Activated CD4-positive, alpha-beta T cell treated with anti-CD3 and anti-CD28 coated beads for 36 hours (primary cell): ENCODE measurements at regions of chr9 and their contacts with region 1.

Region 1: DNA sequence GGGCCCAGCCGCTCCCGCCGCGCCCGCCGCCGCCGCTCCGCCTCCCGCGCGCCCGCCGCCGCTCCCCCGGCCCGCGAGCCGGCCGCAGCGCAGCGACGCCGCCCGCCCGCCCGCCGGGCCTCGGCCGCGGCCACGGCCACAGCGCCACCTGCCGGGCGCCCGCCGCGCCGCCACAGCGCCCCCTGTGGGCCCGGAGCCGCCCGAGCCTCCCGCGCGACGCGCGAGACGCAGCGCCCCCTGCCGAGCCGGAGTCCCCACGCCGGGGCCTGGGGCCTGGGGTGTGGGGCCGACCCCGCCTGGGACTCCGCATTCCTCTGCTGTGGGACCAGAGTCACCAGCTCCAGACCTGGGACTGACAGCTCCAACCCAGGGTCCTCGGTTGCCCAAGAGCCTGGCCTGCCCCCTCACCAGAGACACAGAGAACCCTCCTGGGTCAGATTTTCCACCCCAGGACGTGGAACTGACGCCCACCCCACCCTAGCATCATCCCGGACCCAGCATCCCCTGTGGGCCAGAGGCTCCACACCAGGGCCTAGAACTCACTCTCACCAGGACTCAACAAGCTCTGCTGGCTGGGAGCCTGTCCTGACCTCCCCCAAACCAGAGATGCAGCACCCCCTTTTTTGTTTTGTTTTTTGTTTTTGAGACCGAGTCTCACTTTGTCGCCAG is at the start of gene RAPGEF1:
- DNase-seq: peak; percentile 90
- ATAC-seq: peak; percentile 74
- H3K4me3 Mint-ChIP-seq: peak within 1 kb of the TSS; percentile 95
- H3K27ac Mint-ChIP-seq: peak within 1 kb of the TSS; percentile 95
- H3K4me1 Mint-ChIP-seq: peaks cover 57% of the 10 kb centered on the region
- H3K27me3 Mint-ChIP-seq: no peaks in the 10 kb centered on the region
- total RNA-seq, gene RAPGEF1: 86.7 to 108 TPM

Region 2: GRCh38 chr9:130901498-130902203 is 838.5 kb before region 1 on chr9:
- CTCF ChIA-PET with region 1: no interaction called
- POLR2A ChIA-PET with region 1: no interaction called
- intact Hi-C with region 1: no loop called
- DNase-seq: no peak
- ATAC-seq: no peak
- H3K4me3 Mint-ChIP-seq: no peak overlapping the region
- H3K27ac Mint-ChIP-seq: no peak overlapping the region
- H3K4me1 Mint-ChIP-seq: no peaks in the 10 kb centered on the region
- H3K27me3 Mint-ChIP-seq: peaks cover 2% of the 10 kb centered on the region

Region 3: GRCh38 chr9:131502781-131503625 is 237.1 kb before region 1 on chr9 and contains the start of gene POMT1:
- CTCF ChIA-PET with region 1: interaction called, 4 read pairs
- POLR2A ChIA-PET with region 1: no interaction called
- intact Hi-C with region 1: loop called in 1 of 2 experiments (anchors 2 kb)
- DNase-seq: peak; percentile 94
- ATAC-seq: peak; percentile 42
- H3K4me3 Mint-ChIP-seq: peak within 1 kb of the TSS; percentile 83
- H3K27ac Mint-ChIP-seq: peak within 1 kb of the TSS; percentile 84
- H3K4me1 Mint-ChIP-seq: peaks cover 53% of the 10 kb centered on the region
- H3K27me3 Mint-ChIP-seq: no peaks in the 10 kb centered on the region
- total RNA-seq, gene POMT1: 28.2 to 30.7 TPM

Region 4: DNA sequence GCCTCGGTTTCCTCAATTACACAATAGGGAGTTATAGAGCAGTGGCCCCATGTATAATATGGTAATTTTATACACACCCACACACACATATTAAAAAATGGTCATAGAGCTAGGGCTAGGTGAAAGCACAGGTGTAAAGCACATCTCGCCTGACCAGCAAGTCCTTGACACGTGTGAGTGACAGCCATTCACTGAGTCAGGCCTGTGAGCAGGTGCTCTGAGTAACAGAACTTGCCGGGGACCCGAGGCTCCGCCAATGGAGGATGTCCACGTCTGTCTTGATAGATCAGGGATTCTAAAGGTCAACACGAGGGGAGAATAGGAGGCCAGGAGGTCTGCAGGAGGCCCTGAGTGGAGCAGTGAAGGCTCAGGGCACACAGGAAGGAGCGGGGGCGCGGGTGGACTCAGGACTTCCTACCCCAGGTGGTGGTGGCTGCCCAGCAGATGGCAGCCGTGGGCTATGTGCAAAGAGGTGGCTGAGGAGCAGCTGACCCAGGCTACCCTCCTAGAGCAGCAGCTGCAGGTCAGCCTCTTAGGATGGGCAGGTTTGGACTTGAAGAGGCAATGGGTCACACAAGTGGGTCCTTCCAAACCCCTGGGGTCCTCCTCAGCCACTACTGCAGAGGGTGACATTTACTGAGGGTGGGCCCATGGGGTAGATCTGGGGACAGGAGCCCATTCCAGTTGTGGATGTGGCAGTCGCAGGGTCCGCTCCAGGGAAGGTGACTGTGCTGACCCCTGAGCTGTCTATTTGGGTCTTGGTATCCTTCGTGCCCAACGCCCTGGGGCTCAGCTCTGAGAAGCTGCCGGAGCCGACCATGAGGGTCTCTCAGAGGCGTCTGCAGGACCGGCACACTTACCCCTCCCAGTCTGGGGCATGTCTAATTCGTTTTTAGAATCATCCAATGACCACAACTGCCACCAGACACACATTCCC is 148.9 kb before region 1 on chr9:
- CTCF ChIA-PET with region 1: interaction called, 29 read pairs
- POLR2A ChIA-PET with region 1: interaction called, 3 read pairs
- intact Hi-C with region 1: loop called (anchors 1 to 2 kb)
- DNase-seq: peak; percentile 90
- ATAC-seq: peak; percentile 94
- H3K4me3 Mint-ChIP-seq: no peak overlapping the region
- H3K27ac Mint-ChIP-seq: peak overlapping the region; percentile 85
- H3K4me1 Mint-ChIP-seq: peaks cover 28% of the 10 kb centered on the region
- H3K27me3 Mint-ChIP-seq: no peaks in the 10 kb centered on the region

Region 5: DNA sequence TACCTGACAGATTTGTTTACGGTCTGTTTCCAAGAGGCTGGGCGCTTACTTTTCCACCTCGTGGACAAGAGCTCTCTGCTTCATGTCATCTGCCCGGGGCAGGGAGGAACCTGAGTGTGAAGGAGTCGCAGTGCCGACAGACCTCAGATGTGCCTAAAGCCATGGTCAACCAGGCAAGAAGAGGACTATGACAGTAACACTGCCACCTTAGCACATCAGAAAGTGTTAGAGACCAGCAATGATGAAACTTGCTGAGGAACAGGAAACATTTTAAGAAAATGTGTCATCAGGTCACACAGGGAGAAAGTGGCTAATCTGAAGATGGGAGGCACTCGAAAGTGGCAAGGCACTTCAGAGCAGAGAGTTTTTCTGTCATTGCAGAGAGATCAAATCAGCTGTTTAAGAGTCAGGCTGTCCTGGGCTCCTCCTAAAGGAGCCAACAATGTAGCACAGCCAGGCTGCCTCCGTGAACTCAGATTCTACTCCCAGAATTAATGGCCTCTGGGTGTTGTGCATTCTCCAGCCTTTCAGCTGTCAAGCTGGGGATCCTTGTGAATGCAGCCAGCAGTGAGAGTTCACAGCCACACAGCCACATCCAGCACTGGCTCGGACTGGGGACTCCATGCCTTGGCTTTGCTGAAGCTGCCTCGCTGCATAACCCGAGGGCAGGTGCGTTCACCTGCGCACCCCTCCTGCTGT is 94.9 kb before region 1 on chr9:
- CTCF ChIA-PET with region 1: interaction called, 25 read pairs
- POLR2A ChIA-PET with region 1: no interaction called
- intact Hi-C with region 1: loop called in 1 of 2 experiments (anchors 1 kb)
- DNase-seq: peak; percentile 54
- ATAC-seq: peak; percentile 65
- H3K4me3 Mint-ChIP-seq: no peak overlapping the region
- H3K27ac Mint-ChIP-seq: peak overlapping the region; percentile 89
- H3K4me1 Mint-ChIP-seq: peaks cover 63% of the 10 kb centered on the region
- H3K27me3 Mint-ChIP-seq: no peaks in the 10 kb centered on the region

Region 6: GRCh38 chr9:131678499-131679111 is 61.5 kb before region 1 on chr9:
- CTCF ChIA-PET with region 1: interaction called, 23 read pairs
- POLR2A ChIA-PET with region 1: interaction called, 5 read pairs
- intact Hi-C with region 1: loop called in 1 of 2 experiments (anchors 1 kb)
- DNase-seq: peak; percentile 91
- ATAC-seq: peak; percentile 99
- H3K4me3 Mint-ChIP-seq: peak overlapping the region; percentile 72
- H3K27ac Mint-ChIP-seq: peak overlapping the region; percentile 87
- H3K4me1 Mint-ChIP-seq: peaks cover 88% of the 10 kb centered on the region
- H3K27me3 Mint-ChIP-seq: no peaks in the 10 kb centered on the region

Region 7: DNA sequence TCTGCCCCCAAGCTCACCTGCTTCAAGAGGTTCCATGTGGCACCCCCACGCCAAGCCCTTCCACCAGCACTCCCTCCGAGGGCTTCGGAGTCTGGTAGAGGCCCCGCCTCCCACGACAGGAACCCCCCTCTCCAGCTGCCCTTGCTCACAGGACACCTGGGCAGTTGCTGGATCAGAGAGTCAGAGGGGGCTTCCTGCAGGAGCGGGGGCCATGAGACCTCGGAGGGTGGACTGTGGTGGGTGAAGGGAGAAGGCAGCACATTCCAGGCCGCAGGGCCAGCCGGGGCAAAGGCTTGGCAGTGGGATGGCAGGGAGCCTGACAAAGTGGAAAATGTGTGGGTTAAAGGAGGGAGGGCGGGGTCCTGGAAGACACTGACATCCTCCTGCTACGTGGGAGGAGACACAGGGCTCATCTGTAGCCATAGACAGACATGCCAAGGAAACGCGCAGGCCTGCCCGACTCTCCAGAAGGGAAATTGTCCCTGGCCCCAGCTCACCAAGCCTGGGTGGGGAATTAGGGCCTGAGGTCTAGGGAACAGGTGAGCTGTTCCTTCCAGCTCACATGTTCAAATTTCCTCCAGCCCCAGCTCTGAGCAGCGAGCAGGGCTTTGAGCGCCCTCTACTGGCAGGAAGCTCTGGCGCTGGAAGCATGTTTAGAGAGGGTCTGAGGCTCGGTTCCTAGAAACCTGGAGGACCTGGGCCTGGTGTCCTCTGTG is 496.0 kb after region 1 on chr9:
- CTCF ChIA-PET with region 1: no interaction called
- POLR2A ChIA-PET with region 1: no interaction called
- intact Hi-C with region 1: no loop called
- DNase-seq: peak; percentile 91
- ATAC-seq: no peak
- H3K4me3 Mint-ChIP-seq: no peak overlapping the region
- H3K27ac Mint-ChIP-seq: no peak overlapping the region
- H3K4me1 Mint-ChIP-seq: peaks cover 3% of the 10 kb centered on the region
- H3K27me3 Mint-ChIP-seq: no peaks in the 10 kb centered on the region